Activated T-helper 1 cell treated with anti-CD3 and anti-CD28 coated beads, Interleukin-12 subunit alpha, Interleukin-12 subunit beta, Interleukin-2, Interleukin-4 antibody, amounts not matched to agents 30 ng/mL and 10 ng/mL and 1 ng/mL, durations not matched to agents 14 hours and 24 hours and 36 hours (primary cell): ENCODE measurements at regions of chr12 and their contacts with region 1.

Region 1: DNA sequence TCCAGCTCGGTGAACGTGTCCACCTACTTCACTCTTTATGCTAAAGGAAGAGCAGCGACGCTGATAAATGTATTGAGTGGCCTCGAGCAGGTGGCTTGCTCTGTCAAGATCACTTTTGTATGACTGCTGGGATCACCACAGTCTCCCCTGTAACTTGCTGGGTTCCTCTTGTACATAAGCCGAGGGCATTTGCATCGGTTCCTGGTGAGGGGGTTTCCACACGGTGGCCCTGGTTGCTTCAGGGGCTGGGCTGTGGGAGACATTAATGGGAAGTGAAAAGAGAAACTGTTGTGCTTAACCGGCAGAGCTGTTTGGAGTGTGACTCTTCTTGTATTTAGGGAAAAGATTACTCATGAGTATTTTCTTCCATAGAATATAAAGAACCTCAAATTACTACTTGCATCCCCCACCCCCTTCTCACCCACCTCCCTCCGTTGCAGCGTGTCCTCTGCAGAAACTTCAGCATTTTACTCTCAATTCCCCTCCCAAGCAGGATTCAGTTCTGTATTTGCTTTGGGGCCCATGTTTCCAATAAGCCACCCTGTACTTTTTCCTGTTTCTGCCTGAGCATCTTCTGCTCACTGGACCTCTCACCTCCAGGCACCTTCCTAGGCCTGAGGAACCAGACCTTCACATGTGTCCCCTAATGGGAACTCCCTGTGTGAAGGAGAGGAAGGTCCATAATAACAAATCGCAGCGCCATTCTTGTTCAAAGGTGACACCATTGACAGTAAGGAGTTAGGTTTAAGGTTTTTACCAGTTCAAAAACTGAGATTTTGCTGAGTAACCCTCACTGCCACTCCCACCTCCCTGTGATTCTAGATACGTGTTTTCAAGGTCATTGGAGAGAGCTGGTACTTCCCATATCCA is 187.0 kb downstream of the ETV6 start:
- DNase-seq: peak; percentile 53
- H3K4me3 Mint-ChIP-seq: peak overlapping the region; percentile 67
- H3K27ac Mint-ChIP-seq: peak overlapping the region; percentile 94
- H3K4me1 Mint-ChIP-seq: peaks cover 91% of the 10 kb centered on the region
- H3K27me3 Mint-ChIP-seq: no peaks in the 10 kb centered on the region

Region 2: DNA sequence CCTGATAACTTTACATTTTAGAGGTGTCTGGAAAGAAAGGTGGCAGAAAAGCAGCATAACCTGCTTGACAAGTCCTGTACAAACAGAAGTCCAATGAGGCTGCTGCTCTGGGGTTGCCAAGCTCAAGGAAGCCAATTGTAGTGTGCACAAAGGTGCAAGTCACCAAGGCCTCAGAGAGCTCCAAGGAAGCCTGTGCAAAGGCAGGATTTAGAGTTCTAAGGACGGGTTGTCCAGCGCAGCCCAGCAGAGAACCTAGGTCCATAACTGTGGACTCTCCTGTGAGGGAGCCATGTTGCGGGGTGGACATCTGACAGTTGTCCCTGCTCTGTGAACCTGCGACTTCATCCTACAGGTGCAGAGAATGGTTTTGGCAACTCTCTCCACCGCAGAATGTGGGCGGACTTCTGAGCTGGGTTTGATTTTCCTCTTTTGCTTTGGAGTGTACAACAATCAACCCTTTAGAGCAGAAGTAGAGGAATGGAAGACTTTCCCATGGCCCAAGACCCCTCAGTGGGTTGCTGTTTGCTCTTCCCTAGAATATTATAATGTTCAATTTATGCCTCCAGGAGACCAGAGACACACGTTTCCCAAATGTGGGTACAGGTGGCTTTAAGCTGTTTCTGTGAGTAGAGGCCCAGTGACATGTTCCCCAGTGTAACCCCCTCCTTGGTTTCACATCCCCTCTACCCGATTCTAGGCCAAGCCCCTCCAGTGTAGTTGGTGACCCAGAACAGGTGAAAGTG is 106.0 kb before region 1 on chr12:
- intact Hi-C with region 1: loop called (anchors 1 kb)
- DNase-seq: no peak
- H3K4me3 Mint-ChIP-seq: peak overlapping the region; percentile 66
- H3K27ac Mint-ChIP-seq: peak overlapping the region; percentile 86
- H3K4me1 Mint-ChIP-seq: peaks cover 93% of the 10 kb centered on the region
- H3K27me3 Mint-ChIP-seq: no peaks in the 10 kb centered on the region

Region 3: GRCh38 chr12:11780521-11781101 is 55.9 kb before region 1 on chr12:
- intact Hi-C with region 1: loop called (anchors 1 kb)
- DNase-seq: no peak
- H3K4me3 Mint-ChIP-seq: no peak overlapping the region
- H3K27ac Mint-ChIP-seq: peak overlapping the region; percentile 90
- H3K4me1 Mint-ChIP-seq: peaks cover 85% of the 10 kb centered on the region
- H3K27me3 Mint-ChIP-seq: no peaks in the 10 kb centered on the region

Region 4: DNA sequence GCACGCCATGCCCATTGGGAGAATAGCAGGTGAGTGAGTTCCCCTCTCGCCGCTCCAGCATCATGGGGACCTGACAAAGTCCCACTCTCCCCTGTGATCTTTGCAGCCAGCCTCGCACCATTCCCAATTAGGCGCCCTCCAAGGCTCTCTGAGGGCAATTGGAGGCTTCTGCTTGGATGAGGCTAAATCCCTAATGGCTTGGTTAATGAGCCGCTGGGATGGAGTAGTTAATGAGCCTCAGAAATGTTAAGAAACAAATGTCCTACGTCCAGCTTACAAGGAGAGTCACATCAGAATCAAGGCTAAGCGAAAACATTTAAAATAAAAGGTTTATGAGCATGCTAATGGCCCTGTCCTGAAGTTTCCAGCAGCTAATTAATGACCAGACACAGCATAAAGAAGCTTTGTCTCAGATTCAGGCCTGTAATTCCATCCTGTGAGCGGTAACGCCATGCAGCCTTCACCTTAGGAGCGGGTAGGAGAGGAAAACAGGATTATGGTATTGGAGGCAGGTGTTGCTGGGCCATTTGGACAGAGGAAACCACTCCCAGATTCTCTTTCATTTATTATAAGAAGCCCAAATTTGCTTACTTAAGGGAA is 33.5 kb after region 1 on chr12:
- intact Hi-C with region 1: loop called (anchors 5 kb)
- DNase-seq: no peak
- H3K4me3 Mint-ChIP-seq: no peak overlapping the region
- H3K27ac Mint-ChIP-seq: no peak overlapping the region
- H3K4me1 Mint-ChIP-seq: peaks cover 49% of the 10 kb centered on the region
- H3K27me3 Mint-ChIP-seq: no peaks in the 10 kb centered on the region

Region 5: DNA sequence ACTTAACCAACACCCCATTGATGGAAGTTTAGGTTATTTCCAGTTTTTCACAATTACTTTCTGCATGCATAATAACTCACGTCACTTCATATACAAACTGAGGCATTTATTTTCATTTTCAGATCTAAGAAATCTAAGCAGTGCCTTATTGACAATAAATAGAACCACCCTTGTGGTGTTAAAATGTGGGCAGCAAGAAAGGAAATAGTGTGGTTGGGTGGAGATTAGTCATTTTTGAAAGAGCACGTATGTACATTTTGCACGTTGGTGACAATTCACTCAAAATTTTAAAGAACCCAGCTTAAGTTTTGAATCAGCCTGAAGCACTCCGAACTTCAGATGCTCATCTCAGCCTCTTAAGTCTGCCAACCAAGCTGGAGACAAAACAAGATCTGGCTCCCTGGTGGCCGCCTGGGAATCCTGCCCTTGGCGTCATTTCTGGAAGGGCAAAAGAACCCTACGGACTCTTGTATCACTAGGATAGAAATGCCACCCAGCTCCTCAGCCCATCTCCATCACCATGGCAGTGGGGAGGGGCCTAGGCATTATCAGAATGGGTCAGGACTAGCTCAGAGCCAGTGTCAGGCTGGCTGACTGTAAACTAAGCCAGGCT is 144.7 kb after region 1 on chr12:
- intact Hi-C with region 1: loop called (anchors 1 kb)
- DNase-seq: peak; percentile 73
- H3K4me3 Mint-ChIP-seq: peak overlapping the region; percentile 36
- H3K27ac Mint-ChIP-seq: peak overlapping the region; percentile 96
- H3K4me1 Mint-ChIP-seq: peaks cover 62% of the 10 kb centered on the region
- H3K27me3 Mint-ChIP-seq: no peaks in the 10 kb centered on the region